ENCODE measurements at regions of chr5 and their contacts with region 1.

Region 1: DNA sequence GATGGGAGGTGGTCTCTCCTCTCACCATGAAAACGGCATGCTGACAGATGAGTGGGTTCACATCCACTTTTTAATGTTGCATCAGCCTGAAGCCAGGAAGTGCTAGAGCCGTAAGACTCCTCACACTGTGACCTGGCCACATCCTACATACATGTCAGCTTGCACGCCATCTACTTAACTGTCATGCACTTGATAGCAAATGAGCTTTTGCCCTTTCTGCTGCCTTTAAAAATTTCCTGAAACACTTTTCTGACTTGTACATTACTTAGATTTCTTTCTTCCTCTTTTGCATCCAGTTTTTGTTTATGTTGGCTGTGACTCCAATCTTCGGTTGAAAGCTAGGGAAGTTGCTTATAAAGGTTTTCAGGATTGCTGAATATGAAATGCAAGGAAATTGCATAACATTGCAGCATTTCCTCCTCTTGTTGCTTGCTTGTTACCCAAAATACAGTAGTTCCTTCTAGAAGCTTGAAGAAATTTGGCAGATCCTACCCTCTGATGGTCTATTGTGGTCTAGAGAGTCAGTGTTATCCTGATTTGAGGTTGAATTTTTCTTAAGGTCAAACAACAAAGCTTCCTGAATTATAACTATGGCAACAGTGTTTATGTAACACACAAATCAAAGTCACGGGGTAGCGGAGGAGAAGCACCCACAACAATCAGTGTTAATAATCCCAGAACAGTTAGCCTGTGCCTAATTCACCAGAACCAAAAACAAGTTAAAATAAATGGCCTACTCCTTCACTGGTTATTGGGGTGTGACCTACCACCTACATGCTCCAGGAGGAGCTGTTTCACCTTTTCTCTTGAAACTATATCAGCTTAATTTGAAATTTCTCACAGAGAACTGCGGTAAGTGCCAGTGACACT is 232.5 kb downstream of the ARHGAP26 start:
- DNase-seq: peak; percentile 82
- ATAC-seq: peak; percentile 78
- H3K4me3 ChIP-seq: no peak overlapping the region
- H3K27ac ChIP-seq: peak overlapping the region; percentile 89
- H3K4me1 ChIP-seq: peaks cover 49% of the 10 kb centered on the region
- H3K27me3 ChIP-seq: no peaks in the 10 kb centered on the region
- CTCF ChIP-seq: peak; percentile 71 to 79 (median 75)
- EP300 ChIP-seq: peak; percentile 95 to 97
- POLR2A ChIP-seq: peak; percentile 47; the same call in 1 of the 2 replicates
- RAD21 ChIP-seq: peak; percentile 86

Region 2: GRCh38 chr5:142959683-142960657 is 42.7 kb before region 1 on chr5:
- CTCF ChIA-PET with region 1: interaction called, 15 read pairs
- POLR2A ChIA-PET with region 1: no interaction called
- RAD21 ChIA-PET with region 1: interaction called, 10 read pairs
- SMC1A ChIA-PET with region 1: interaction called, 4 read pairs
- in situ Hi-C with region 1: no loop called
- intact Hi-C with region 1: no loop called
- DNase-seq: no peak
- ATAC-seq: peak; percentile 82
- H3K4me3 ChIP-seq: no peak overlapping the region
- H3K27ac ChIP-seq: no peak overlapping the region
- H3K4me1 ChIP-seq: peaks cover 5% of the 10 kb centered on the region; the same call in 1 of the 2 replicates
- H3K27me3 ChIP-seq: no peaks in the 10 kb centered on the region
- CTCF ChIP-seq: no peak
- EP300 ChIP-seq: peak in 1 of 2 experiments; percentile 38; a peak in 1 of 4 replicates
- POLR2A ChIP-seq: no peak
- RAD21 ChIP-seq: no peak

Region 3: DNA sequence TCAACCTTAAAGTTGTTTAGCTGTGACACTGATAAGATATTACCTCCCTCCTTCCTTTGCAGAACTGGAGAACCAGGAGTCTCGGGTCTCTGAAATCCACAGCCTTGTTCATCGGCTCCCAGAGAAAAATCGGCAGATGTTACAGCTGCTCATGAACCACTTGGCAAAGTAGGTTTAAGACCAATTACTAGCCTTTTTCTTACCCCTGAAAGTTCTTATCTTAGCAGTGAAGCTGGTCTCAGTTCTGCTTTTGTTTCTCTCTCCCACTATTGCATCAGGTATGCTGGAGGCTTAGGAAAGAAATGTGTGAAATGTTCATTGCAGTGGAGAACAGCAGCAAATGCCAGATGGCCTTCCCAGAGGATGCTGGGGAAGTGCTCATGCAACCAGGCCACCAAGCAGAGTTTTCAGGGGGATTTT is 54.9 kb after region 1 on chr5:
- CTCF ChIA-PET with region 1: interaction called, 4 read pairs
- POLR2A ChIA-PET with region 1: interaction called, 7 read pairs
- RAD21 ChIA-PET with region 1: interaction called, 12 read pairs
- SMC1A ChIA-PET with region 1: interaction called, 19 read pairs
- in situ Hi-C with region 1: no loop called
- intact Hi-C with region 1: loop called (anchors 10 kb)
- DNase-seq: peak; percentile 85
- ATAC-seq: peak; percentile 59
- H3K4me3 ChIP-seq: peak overlapping the region; percentile 77
- H3K27ac ChIP-seq: peak overlapping the region; percentile 100
- H3K4me1 ChIP-seq: peaks cover 56% of the 10 kb centered on the region
- H3K27me3 ChIP-seq: no peaks in the 10 kb centered on the region
- CTCF ChIP-seq: no peak
- EP300 ChIP-seq: peak; percentile 77 to 89; a peak in 3 of 4 replicates
- POLR2A ChIP-seq: peak; percentile 54; the same call in 1 of the 2 replicates
- RAD21 ChIP-seq: peak; percentile 36; the same call in 1 of the 2 replicates

Region 4: DNA sequence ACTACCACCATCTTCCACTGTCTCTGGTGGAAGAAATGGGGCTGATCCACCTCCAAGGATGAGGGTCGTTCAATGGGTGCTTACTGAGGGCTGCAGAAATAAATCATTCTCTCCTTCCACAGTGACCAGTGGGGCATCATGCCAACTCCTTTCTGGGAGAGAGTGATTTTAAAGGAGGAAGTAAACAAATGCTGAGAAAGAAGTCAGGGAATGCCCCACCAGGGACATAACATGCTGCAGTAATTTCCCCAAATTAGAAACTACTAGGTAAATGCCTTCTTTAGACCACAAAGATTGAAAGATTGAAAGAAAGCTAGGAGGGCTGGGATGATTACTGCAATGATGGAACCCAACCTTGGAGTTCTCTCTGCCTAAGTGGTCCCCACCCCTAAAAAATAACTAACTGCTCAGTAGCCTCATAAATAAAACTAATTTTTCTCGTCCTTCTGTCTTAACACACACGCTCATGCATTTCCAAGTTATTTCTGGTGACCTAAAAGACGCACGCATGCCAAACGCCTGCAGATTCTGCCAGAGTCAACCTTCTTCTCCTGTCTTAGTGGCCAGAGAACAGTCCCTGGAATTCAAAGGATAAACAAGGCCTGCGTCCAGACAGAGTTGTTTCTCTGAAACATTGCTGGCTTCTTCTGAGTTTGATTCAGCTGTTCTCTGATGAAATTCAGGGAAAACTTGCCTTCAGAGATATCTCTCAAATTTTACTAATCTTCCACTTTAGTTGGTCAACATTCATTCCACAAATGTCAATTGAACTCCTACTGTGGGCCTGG is 150.8 kb after region 1 on chr5:
- CTCF ChIA-PET with region 1: no interaction called
- POLR2A ChIA-PET with region 1: no interaction called
- RAD21 ChIA-PET with region 1: no interaction called
- SMC1A ChIA-PET with region 1: no interaction called
- in situ Hi-C with region 1: no loop called
- intact Hi-C with region 1: no loop called
- DNase-seq: no peak
- ATAC-seq: peak; percentile 54
- H3K4me3 ChIP-seq: no peak overlapping the region
- H3K27ac ChIP-seq: no peak overlapping the region
- H3K4me1 ChIP-seq: no peaks in the 10 kb centered on the region
- H3K27me3 ChIP-seq: no peaks in the 10 kb centered on the region
- CTCF ChIP-seq: no peak
- EP300 ChIP-seq: no peak
- POLR2A ChIP-seq: no peak
- RAD21 ChIP-seq: no peak

Region 5: GRCh38 chr5:143206196-143207053 is 203.7 kb after region 1 on chr5:
- CTCF ChIA-PET with region 1: interaction called, 21 read pairs
- POLR2A ChIA-PET with region 1: interaction called, 7 read pairs
- RAD21 ChIA-PET with region 1: interaction called, 52 read pairs
- SMC1A ChIA-PET with region 1: interaction called, 53 read pairs
- in situ Hi-C with region 1: no loop called
- intact Hi-C with region 1: loop called (anchors 1 kb)
- DNase-seq: peak; percentile 98
- ATAC-seq: peak; percentile 71
- H3K4me3 ChIP-seq: peak overlapping the region; percentile 21; the same call in 1 of the 2 replicates
- H3K27ac ChIP-seq: peak overlapping the region; percentile 94
- H3K4me1 ChIP-seq: peaks cover 52% of the 10 kb centered on the region
- H3K27me3 ChIP-seq: no peaks in the 10 kb centered on the region
- CTCF ChIP-seq: peak in 1 of 3 experiments; percentile 13; a peak in 1 of 6 replicates
- EP300 ChIP-seq: peak; percentile 76 to 91; a peak in 2 of 4 replicates
- POLR2A ChIP-seq: peak; percentile 61; the same call in 1 of the 2 replicates
- RAD21 ChIP-seq: peak; percentile 40

Region 6: DNA sequence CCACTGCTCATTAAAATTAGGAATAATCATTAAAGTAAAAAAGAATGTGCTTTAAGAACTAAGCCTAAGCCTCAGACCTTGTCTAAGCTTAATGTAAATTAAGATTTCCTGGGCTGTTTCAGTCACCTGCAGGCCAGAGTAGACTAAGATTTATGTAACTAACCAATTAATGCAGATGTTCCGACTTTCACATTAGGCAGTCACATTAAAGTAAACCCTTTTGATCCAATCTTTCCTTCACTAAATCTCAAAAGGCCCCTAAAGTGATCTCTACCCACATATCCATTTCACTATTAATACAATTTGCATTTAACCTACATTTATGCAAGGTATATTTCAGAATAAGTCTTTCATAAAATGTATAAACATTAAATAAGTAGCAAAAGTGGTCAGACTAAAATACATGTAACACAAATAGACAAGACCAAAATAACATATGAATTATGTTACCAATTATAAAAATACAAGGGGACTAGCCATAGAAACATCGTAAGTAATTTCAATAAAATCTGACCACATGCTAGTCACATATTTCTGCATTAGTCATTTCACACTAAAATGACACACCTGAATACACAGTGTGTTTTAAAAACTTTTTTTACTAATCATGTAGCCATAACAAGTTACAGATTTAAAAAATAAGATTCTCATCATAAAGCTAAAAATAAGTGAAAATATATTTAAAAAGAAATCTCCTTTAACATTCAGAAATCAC is 393.1 kb after region 1 on chr5:
- CTCF ChIA-PET with region 1: interaction called, 10 read pairs
- POLR2A ChIA-PET with region 1: interaction called, 4 read pairs
- RAD21 ChIA-PET with region 1: interaction called, 19 read pairs
- SMC1A ChIA-PET with region 1: interaction called, 20 read pairs
- in situ Hi-C with region 1: no loop called
- intact Hi-C with region 1: loop called (anchors 2 kb)
- DNase-seq: no peak
- ATAC-seq: peak; percentile 17
- H3K4me3 ChIP-seq: peak overlapping the region; percentile 83
- H3K27ac ChIP-seq: peak overlapping the region; percentile 93
- H3K4me1 ChIP-seq: no peaks in the 10 kb centered on the region
- H3K27me3 ChIP-seq: no peaks in the 10 kb centered on the region
- CTCF ChIP-seq: no peak
- EP300 ChIP-seq: peak; percentile 24 to 31; a peak in 1 of 4 replicates
- POLR2A ChIP-seq: no peak
- RAD21 ChIP-seq: no peak

Region 7: GRCh38 chr5:143968011-143968878 is 965.6 kb after region 1 on chr5:
- CTCF ChIA-PET with region 1: interaction called, 8 read pairs
- POLR2A ChIA-PET with region 1: no interaction called
- RAD21 ChIA-PET with region 1: interaction called, 8 read pairs
- SMC1A ChIA-PET with region 1: interaction called, 7 read pairs
- in situ Hi-C with region 1: loop called (anchors 10 kb)
- intact Hi-C with region 1: loop called (anchors 10 kb)
- DNase-seq: peak; percentile 34
- ATAC-seq: peak; percentile 86
- H3K4me3 ChIP-seq: no peak overlapping the region
- H3K27ac ChIP-seq: no peak overlapping the region
- H3K4me1 ChIP-seq: no peaks in the 10 kb centered on the region
- H3K27me3 ChIP-seq: no peaks in the 10 kb centered on the region; a peak in 1 of 4 replicates
- CTCF ChIP-seq: peak; percentile 46 to 63 (median 56); a peak in 5 of 6 replicates
- EP300 ChIP-seq: no peak
- POLR2A ChIP-seq: no peak
- RAD21 ChIP-seq: peak; percentile 69

Measured in GM12878 (cell line).